Activated CD4-positive, alpha-beta T cell treated with anti-CD3 and anti-CD28 coated beads, Interleukin-2, amount 10 ng/mL, durations not matched to agents 24 days and 14 days (primary cell): ENCODE measurements at regions of chr12 and their contacts with region 1.

Region 1: GRCh38 chr12:131894313-131894860 is at the start of gene ULK1:
- DNase-seq: peak; percentile 99
- H3K4me3 Mint-ChIP-seq: peak within 1 kb of the TSS; percentile 87
- H3K27ac Mint-ChIP-seq: peak within 1 kb of the TSS; percentile 80
- H3K4me1 Mint-ChIP-seq: peaks cover 8% of the 10 kb centered on the region
- H3K27me3 Mint-ChIP-seq: no peaks in the 10 kb centered on the region
- total RNA-seq, gene ULK1: 25.3 and 25.7 TPM in 2 replicates

Region 2: DNA sequence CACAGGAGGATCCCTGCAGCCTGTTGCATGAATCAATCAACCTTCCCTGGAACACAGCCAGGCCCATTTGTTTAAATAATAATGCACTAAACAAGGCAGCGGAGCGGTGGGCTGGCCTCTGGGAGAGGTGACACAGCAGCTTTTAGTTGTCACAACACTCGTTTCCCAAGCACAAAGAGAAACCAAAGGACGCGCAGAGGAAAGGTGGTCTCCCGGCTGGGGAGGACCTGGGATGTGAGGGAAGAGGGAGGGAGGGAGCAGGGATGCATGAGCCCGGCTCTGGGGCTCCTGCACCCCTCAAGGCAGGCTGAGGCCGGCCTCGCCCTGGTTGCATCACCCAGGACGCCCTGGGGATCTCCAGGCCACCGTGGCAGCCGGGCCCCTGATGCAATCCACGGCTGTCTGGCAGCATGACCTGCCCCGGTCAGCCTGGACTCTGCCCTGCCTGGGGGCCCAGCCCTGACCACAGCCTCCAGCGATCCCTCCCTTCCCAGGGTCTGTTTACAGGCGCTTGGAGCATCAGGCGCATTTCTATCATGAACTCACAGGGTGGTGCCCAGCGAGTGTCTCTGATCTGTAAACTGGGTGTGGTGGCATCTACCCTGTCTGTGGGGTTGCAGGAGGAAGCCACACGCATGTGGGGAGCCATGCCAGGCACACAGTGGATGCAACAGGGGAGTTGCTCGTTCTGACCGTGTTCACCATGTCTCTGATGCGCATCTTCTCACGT is 33.7 kb before region 1 on chr12:
- intact Hi-C with region 1: no loop called
- DNase-seq: no peak
- H3K4me3 Mint-ChIP-seq: no peak overlapping the region
- H3K27ac Mint-ChIP-seq: no peak overlapping the region
- H3K4me1 Mint-ChIP-seq: peaks cover 2% of the 10 kb centered on the region
- H3K27me3 Mint-ChIP-seq: no peaks in the 10 kb centered on the region

Region 3: GRCh38 chr12:131928711-131929580 is 34.6 kb after region 1 on chr12 and contains the start of gene PUS1:
- intact Hi-C with region 1: loop called (anchors 1 kb)
- DNase-seq: peak; percentile 98
- H3K4me3 Mint-ChIP-seq: peak within 1 kb of the TSS; percentile 94
- H3K27ac Mint-ChIP-seq: peak within 1 kb of the TSS; percentile 92
- H3K4me1 Mint-ChIP-seq: peaks cover 15% of the 10 kb centered on the region
- H3K27me3 Mint-ChIP-seq: no peaks in the 10 kb centered on the region
- total RNA-seq, gene PUS1: 91.6 and 97.0 TPM in 2 replicates

Region 4: DNA sequence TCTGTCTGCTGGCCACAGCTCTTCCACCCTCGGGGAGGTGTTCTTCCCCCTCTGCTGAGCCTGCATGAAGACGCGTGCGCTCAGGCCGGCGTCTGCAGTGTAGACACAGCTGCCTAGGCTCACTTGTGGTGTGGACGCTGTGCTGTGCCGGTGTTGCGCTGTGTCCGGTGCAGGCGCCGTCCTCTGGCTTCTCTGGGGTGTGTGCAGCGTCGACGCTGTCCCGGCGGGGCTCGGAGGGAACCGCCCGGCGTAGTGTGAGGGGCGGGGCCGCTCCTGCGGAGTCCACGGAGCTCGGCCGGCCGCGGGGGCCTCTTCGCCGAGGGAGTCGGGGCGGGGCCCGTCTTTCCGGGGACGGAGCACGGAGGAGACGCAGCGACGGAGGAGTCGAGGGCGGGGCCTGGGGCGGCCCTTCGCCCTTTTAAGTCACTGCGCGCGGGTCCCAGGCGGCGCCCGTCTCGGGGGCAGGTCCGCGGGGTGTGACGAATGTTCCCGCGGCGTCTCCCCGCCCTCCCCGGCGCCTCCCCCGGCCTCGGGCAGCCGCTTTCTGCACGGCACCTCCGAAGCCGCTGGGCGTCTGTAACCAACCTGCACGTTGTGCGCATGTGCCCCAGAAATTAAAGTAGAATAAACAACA is 295.1 kb after region 1 on chr12:
- intact Hi-C with region 1: loop called (anchors 1 kb)
- DNase-seq: peak; percentile 98
- H3K4me3 Mint-ChIP-seq: peak overlapping the region; percentile 99
- H3K27ac Mint-ChIP-seq: peak overlapping the region; percentile 91
- H3K4me1 Mint-ChIP-seq: peaks cover 26% of the 10 kb centered on the region
- H3K27me3 Mint-ChIP-seq: peaks cover 2% of the 10 kb centered on the region